ENCODE measurements at regions of chr3 and their contacts with region 1.

Region 1: GRCh38 chr3:123652346-123652984 is 67.6 kb upstream of the HACD2 start:
- DNase-seq: peak; percentile 75
- H3K4me3 Mint-ChIP-seq: no peak overlapping the region
- H3K27ac Mint-ChIP-seq: no peak overlapping the region
- H3K4me1 Mint-ChIP-seq: peaks cover 17% of the 10 kb centered on the region
- H3K27me3 Mint-ChIP-seq: no peaks in the 10 kb centered on the region
- CTCF ChIP-seq: peak; percentile 91

Region 2: GRCh38 chr3:123618768-123619484 is 33.5 kb before region 1 on chr3:
- CTCF ChIA-PET with region 1: interaction called, 14 read pairs
- POLR2A ChIA-PET with region 1: no interaction called
- intact Hi-C with region 1: no loop called
- DNase-seq: peak; percentile 88
- H3K4me3 Mint-ChIP-seq: peak overlapping the region; percentile 60
- H3K27ac Mint-ChIP-seq: peak overlapping the region; percentile 40
- H3K4me1 Mint-ChIP-seq: peaks cover 31% of the 10 kb centered on the region
- H3K27me3 Mint-ChIP-seq: no peaks in the 10 kb centered on the region
- CTCF ChIP-seq: no peak

Region 3: GRCh38 chr3:123642182-123642956 is 10.1 kb before region 1 on chr3:
- CTCF ChIA-PET with region 1: interaction called, 101 read pairs
- POLR2A ChIA-PET with region 1: no interaction called
- intact Hi-C with region 1: no loop called
- DNase-seq: peak; percentile 89
- H3K4me3 Mint-ChIP-seq: no peak overlapping the region
- H3K27ac Mint-ChIP-seq: no peak overlapping the region
- H3K4me1 Mint-ChIP-seq: peaks cover 5% of the 10 kb centered on the region
- H3K27me3 Mint-ChIP-seq: no peaks in the 10 kb centered on the region
- CTCF ChIP-seq: no peak

Region 4: GRCh38 chr3:123694366-123695145 is 42.1 kb after region 1 on chr3:
- CTCF ChIA-PET with region 1: interaction called, 162 read pairs
- POLR2A ChIA-PET with region 1: interaction called, 4 read pairs
- intact Hi-C with region 1: no loop called
- DNase-seq: no peak
- H3K4me3 Mint-ChIP-seq: no peak overlapping the region
- H3K27ac Mint-ChIP-seq: no peak overlapping the region
- H3K4me1 Mint-ChIP-seq: no peaks in the 10 kb centered on the region
- H3K27me3 Mint-ChIP-seq: no peaks in the 10 kb centered on the region
- CTCF ChIP-seq: no peak

Region 5: GRCh38 chr3:123723522-123724168 is 71.2 kb after region 1 on chr3:
- CTCF ChIA-PET with region 1: interaction called, 117 read pairs
- POLR2A ChIA-PET with region 1: no interaction called
- intact Hi-C with region 1: loop called (anchors 1 kb)
- DNase-seq: peak; percentile 93
- H3K4me3 Mint-ChIP-seq: no peak overlapping the region
- H3K27ac Mint-ChIP-seq: no peak overlapping the region
- H3K4me1 Mint-ChIP-seq: peaks cover 7% of the 10 kb centered on the region
- H3K27me3 Mint-ChIP-seq: no peaks in the 10 kb centered on the region
- CTCF ChIP-seq: peak; percentile 64

Region 6: DNA sequence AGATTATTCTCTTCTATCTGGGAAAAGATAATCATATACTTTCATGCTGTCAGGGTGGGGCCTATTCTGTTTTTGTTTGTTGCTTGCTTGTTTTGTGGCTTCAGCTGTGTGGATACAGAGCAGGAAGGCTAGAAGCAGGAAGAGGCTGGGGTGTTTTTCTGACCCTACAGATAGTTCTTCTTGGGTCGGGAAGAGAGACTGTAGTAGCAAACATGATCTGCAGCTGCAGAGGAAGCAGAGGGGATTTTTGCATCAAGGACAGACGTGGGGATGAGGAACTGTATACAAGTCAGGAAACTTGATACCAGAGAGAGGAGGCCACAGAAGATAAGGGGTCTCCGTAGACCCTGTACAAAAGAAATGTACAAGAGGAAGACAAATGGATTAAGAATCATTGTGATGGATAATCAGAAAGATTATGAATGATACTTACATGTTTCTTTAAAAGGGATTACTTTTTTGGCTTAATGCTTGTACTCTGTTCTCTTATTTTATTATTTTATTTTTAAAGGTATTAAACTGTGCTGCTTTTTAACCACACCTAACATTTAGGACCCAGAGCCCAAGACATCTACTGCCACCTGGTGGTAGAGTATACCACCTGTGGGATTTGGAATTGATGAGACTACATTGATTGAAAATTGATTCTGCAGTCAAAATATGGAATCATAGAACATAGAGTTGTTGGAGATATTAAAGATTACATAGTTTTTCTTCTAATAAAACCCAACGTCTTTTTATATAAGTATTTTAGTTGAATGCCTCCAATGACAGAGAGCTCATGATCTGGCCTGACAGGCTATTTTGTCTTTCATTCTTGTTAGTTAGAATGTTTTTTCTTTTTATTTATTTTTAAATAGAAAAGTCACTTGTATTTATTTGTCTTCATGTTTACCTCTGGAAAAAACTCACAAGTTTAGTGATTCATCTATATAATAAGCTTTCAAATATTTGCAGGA is 426.8 kb after region 1 on chr3:
- CTCF ChIA-PET with region 1: interaction called, 53 read pairs
- POLR2A ChIA-PET with region 1: no interaction called
- intact Hi-C with region 1: loop called (anchors 1 kb)
- DNase-seq: peak; percentile 48
- H3K4me3 Mint-ChIP-seq: no peak overlapping the region
- H3K27ac Mint-ChIP-seq: no peak overlapping the region
- H3K4me1 Mint-ChIP-seq: no peaks in the 10 kb centered on the region
- H3K27me3 Mint-ChIP-seq: peaks cover 78% of the 10 kb centered on the region
- CTCF ChIP-seq: peak; percentile 72